HEK293 (cell line): ENCODE measurements at regions of chr16 and their contacts with region 1.

Region 1: GRCh38 chr16:22077700-22078313 is 14.5 kb upstream of the VWA3A start:
- H3K4me3 ChIP-seq: no peak overlapping the region
- H3K27ac ChIP-seq: no peak overlapping the region
- H3K4me1 ChIP-seq: no peaks in the 10 kb centered on the region
- CTCF ChIP-seq: peak; percentile 32

Region 2: GRCh38 chr16:22007509-22008214 is 70.1 kb before region 1 on chr16 and contains the start of gene MOSMO:
- CTCF ChIA-PET with region 1: interaction called, 302 read pairs
- POLR2A ChIA-PET with region 1: interaction called, 5 read pairs
- H3K4me3 ChIP-seq: peak within 1 kb of the TSS; percentile 97
- H3K27ac ChIP-seq: peak within 1 kb of the TSS; percentile 86
- H3K4me1 ChIP-seq: peaks cover 5% of the 10 kb centered on the region
- CTCF ChIP-seq: peak; percentile 53

Region 3: GRCh38 chr16:22023505-22023904 is 54.3 kb before region 1 on chr16:
- CTCF ChIA-PET with region 1: interaction called, 13 read pairs
- POLR2A ChIA-PET with region 1: no interaction called
- H3K4me3 ChIP-seq: no peak overlapping the region
- H3K27ac ChIP-seq: no peak overlapping the region
- H3K4me1 ChIP-seq: peaks cover 20% of the 10 kb centered on the region
- CTCF ChIP-seq: no peak

Region 4: GRCh38 chr16:22055878-22056277 is 21.9 kb before region 1 on chr16:
- CTCF ChIA-PET with region 1: interaction called, 27 read pairs
- POLR2A ChIA-PET with region 1: no interaction called
- H3K4me3 ChIP-seq: no peak overlapping the region
- H3K27ac ChIP-seq: no peak overlapping the region
- H3K4me1 ChIP-seq: no peaks in the 10 kb centered on the region
- CTCF ChIP-seq: no peak

Region 5: DNA sequence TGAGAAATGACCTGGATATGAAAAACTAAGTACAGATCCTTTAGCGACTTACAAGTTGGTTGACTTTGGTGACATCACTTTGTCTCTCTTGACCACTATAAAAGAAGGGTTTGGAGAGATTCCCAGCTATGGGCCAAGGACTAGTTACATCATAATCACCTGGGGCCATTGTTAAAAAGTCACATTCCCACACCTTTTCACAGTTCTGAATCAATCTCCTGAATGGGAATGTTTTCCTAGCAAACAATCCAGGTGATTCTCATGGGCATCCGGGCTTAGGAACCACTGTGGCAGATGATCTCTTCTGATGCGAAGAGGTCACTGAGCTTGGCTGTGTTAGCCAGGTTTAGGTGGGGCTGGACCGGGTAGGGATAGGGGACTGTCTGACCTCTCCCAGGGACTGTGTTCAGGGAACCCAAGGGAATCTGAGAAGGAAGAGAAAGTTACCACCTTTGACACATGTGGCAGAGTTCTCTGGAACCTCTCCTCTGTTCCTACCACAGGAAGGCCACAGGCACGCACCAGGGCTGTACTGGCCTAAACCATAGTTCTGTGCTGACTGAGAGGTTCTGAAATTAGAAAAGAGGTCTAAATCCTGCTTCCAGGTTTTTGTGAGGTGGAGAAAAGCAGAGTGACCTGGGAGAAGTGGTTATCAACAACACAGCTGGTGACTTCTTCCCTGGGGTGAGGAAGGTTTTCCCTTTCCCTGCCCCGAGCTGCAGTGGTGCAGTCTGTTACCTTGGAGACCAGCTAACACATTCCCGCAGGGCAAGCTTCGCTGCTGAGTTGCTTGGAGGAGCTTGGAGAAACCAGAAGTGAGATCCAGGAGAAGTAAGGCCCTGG is 14.2 kb after region 1 on chr16 and contains the start of gene VWA3A:
- CTCF ChIA-PET with region 1: interaction called, 40 read pairs
- POLR2A ChIA-PET with region 1: no interaction called
- H3K4me3 ChIP-seq: no peak within 1 kb of the TSS
- H3K27ac ChIP-seq: no peak within 1 kb of the TSS
- H3K4me1 ChIP-seq: peaks cover 2% of the 10 kb centered on the region; the same call in 1 of the 2 replicates
- CTCF ChIP-seq: no peak

Region 6: DNA sequence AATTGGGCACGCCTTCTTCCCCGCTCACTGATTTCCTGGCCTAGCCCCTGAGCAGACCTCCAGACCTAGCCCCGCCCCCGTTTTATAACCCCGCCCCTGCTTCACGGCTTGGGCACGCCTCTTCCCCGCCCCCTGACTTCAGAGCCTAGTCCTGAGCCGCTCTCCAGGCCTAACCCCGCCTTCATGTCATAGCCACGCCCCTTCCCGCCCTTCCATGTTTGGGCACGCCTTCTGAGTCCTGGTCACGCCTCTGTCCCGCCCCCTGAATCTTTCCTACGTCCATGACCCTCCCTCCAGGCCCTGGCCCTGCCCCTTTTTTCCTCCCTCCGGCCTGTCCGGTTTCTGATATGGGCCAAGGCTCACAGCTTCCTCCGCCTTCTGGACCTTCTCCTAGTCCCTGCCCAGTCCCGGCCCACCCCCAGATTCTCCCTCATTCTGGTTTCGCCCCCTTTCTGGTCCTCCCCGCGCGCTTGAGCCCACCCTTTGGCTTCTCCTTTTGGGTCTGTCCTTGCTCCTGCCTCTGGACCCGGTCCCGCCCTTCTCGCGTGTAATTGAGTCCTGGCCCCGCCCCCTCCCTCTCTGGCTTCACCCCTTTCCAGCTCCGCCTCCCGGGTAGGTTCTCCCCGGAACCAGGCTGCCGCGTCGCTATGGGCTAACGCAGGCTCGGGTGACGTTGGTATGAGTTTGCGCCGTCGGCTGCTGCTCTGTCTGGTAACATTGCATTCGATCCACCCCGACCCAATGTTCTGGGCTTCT is 113.1 kb after region 1 on chr16:
- CTCF ChIA-PET with region 1: interaction called, 60 read pairs
- POLR2A ChIA-PET with region 1: no interaction called
- H3K4me3 ChIP-seq: peak overlapping the region; percentile 63
- H3K27ac ChIP-seq: peak overlapping the region; percentile 27; the same call in 1 of the 2 replicates
- H3K4me1 ChIP-seq: peaks cover 6% of the 10 kb centered on the region
- CTCF ChIP-seq: no peak